Heart right ventricle (tissue), 16 donors: ENCODE measurements at regions of chr6 and their contacts with region 1.

Region 1: GRCh38 chr6:150579611-150580010 is 20.1 kb upstream of the PLEKHG1 start:
- DNase-seq: peak in 1 of 2 donors; percentile 39
- ATAC-seq: peak in 5 of 8 donors; percentile 29 to 83 (median 54)
- H3K4me3 ChIP-seq: no peak overlapping the region
- H3K27ac ChIP-seq: no peak overlapping the region
- H3K4me1 ChIP-seq: peaks cover 0 to 15% (median 0%) of the 10 kb centered on the region in 9 donors
- H3K27me3 ChIP-seq: peaks cover 0 to 9% (median 0%) of the 10 kb centered on the region in 7 donors
- CTCF ChIP-seq: no peak

Region 2: GRCh38 chr6:150443621-150444020 is 136.0 kb before region 1 on chr6:
- intact Hi-C with region 1: loop called in 1 of 10 experiments (anchors 5 kb)
- DNase-seq: no peak
- ATAC-seq: no peak
- H3K4me3 ChIP-seq: no peak overlapping the region
- H3K27ac ChIP-seq: no peak overlapping the region
- H3K4me1 ChIP-seq: no peaks in the 10 kb centered on the region
- H3K27me3 ChIP-seq: no peaks in the 10 kb centered on the region
- CTCF ChIP-seq: no peak

Region 3: DNA sequence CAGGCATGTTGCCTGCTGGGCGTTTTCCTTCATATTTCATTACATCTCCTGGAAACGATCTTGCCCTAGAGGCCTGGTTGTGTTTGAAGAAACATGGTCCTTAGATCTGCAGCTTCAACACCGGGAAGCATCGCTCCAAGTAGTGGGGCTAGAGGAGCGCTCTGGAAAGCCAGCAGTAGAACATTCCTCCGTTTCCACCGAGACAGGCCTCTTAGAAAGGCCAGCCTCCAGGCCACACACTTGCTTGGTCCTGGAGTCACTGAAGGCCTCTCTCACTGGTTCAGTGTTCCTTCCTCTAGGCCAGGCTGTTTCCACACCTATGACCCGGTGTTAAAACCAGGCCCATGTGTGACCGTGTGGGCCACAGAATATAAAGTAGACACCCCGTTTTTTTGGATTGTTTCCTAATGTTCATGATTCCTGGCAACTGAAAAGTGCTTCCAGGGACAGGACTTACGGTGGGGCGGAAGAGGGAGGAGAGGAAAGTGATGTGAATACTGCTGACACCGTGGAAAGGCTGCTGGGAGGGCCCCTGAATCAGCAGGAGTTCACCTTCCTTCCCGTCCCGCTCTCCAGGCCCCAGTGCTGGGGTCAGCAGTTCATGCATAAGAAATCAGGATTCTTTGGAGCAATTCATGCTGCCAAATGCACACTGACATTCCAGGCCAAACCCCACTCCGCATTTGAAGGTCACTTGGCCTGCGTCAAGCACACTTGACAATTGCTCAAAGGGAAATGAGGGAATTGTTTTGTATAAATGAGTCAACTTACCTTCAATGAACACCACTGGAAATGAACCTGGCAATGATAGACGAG is 127.0 kb before region 1 on chr6:
- intact Hi-C with region 1: loop called in 1 of 10 experiments (anchors 5 kb)
- DNase-seq: peak; percentile 34 to 81
- ATAC-seq: peak; percentile 85 to 97 (median 94)
- H3K4me3 ChIP-seq: no peak overlapping the region
- H3K27ac ChIP-seq: peak overlapping the region; percentile 65 to 92 (median 78)
- H3K4me1 ChIP-seq: peaks cover 0 to 25% (median 8%) of the 10 kb centered on the region in 9 donors
- H3K27me3 ChIP-seq: no peaks in the 10 kb centered on the region
- CTCF ChIP-seq: no peak